ENCODE measurements at regions of chr2 and their contacts with region 1.

Region 1: GRCh38 chr2:173021939-173022371 is 53.7 kb upstream of the MAP3K20 start:
- DNase-seq: no peak
- ATAC-seq: peak; percentile 48 to 76 (median 68)
- H3K4me3 ChIP-seq: no peak overlapping the region
- H3K27ac ChIP-seq: no peak overlapping the region
- H3K4me1 ChIP-seq: peaks cover 6% of the 10 kb centered on the region
- H3K27me3 ChIP-seq: no peaks in the 10 kb centered on the region
- CTCF ChIP-seq: peak; percentile 44

Region 2: GRCh38 chr2:172985139-172985901 is 36.6 kb before region 1 on chr2:
- intact Hi-C with region 1: loop called (anchors 2 to 5 kb)
- DNase-seq: peak; percentile 16 to 62
- ATAC-seq: peak; percentile 88 to 95 (median 93)
- H3K4me3 ChIP-seq: peak overlapping the region; percentile 37
- H3K27ac ChIP-seq: peak overlapping the region; percentile 82
- H3K4me1 ChIP-seq: peaks cover 11% of the 10 kb centered on the region
- H3K27me3 ChIP-seq: no peaks in the 10 kb centered on the region
- CTCF ChIP-seq: no peak

Region 3: DNA sequence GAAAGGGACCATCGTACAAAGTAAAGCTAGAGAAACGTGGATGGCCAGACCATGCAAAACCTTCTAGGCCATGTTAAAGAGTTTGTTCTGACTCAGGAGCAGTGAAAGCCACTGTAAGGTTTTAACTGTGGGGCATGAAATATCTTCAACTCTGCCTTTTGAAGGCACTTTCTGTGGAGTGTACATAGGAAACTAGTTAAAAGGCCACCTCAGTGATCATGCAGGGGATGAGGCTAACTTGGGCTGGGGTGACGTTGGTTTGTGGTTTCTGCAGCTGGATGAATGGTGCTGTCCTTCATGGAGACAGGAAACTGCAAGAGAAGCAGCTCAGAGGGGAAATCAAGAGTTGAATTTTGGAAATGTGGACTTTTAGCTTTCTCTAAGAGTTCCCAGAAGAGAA is 523.4 kb after region 1 on chr2:
- intact Hi-C with region 1: no loop called
- DNase-seq: no peak
- ATAC-seq: no peak
- H3K4me3 ChIP-seq: no peak overlapping the region
- H3K27ac ChIP-seq: no peak overlapping the region
- H3K4me1 ChIP-seq: no peaks in the 10 kb centered on the region
- H3K27me3 ChIP-seq: no peaks in the 10 kb centered on the region
- CTCF ChIP-seq: no peak

Region 4: DNA sequence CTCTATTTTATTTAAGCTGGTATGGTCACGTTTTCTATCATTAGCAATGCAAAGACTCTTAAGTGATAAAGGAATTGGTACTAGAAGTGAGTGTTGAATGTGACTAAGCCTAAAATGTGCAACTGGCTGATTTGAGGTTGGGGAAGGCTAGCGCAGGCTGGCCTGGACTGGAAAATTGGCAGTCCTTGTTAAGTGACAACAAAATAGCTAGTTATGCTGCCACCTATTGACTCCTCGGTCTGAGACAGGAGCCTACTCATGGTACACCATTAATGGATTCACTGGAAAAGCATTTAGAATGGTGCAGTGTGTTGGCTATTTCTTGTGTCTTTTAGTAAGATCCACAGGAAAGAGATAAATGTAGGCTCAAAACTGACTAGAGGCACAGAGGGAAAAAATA is 1581.3 kb after region 1 on chr2:
- intact Hi-C with region 1: no loop called
- DNase-seq: peak in 1 of 2 donors; percentile 58
- ATAC-seq: peak; percentile 63 to 89 (median 76)
- H3K4me3 ChIP-seq: no peak overlapping the region
- H3K27ac ChIP-seq: no peak overlapping the region
- H3K4me1 ChIP-seq: no peaks in the 10 kb centered on the region
- H3K27me3 ChIP-seq: no peaks in the 10 kb centered on the region
- CTCF ChIP-seq: peak; percentile 49